ENCODE measurements at regions of chr16 and their contacts with region 1.

Region 1: DNA sequence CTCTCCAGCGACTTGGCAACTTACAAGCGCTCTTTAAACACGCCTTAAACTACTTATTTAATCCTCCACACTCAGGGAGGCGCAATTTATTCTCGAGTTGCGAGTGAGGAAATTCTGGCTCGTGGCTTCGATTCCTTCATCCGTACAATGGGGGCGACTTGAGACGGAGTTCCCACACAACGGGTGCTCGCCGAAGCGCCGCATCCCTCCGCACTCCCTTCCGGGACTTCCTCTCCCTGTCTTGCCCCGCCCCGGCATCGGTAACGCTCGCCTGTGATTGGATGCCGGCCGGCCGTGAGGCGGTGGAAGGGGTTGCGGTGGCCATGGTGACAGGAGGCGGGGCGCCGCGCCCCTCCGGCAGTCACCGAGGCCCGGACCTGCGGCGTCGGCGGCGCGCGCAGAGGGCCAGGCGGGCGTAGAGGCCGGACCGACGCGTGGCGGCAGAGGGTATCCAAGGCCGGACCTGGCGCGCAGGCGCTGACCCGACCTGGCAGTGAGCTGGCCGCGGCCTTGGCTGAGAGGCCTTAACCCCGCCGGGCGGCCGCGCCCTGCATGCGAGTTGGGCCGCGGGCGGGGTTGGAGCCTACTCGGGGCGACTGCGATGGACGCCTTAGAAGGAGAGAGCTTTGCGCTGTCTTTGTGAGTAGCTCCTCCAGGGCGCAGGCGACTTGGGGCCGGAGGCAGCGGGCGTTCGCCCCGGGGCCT is at the start of gene ARL2BP:
- DNase-seq: peak; percentile 100
- CTCF ChIP-seq: no peak

Region 2: DNA sequence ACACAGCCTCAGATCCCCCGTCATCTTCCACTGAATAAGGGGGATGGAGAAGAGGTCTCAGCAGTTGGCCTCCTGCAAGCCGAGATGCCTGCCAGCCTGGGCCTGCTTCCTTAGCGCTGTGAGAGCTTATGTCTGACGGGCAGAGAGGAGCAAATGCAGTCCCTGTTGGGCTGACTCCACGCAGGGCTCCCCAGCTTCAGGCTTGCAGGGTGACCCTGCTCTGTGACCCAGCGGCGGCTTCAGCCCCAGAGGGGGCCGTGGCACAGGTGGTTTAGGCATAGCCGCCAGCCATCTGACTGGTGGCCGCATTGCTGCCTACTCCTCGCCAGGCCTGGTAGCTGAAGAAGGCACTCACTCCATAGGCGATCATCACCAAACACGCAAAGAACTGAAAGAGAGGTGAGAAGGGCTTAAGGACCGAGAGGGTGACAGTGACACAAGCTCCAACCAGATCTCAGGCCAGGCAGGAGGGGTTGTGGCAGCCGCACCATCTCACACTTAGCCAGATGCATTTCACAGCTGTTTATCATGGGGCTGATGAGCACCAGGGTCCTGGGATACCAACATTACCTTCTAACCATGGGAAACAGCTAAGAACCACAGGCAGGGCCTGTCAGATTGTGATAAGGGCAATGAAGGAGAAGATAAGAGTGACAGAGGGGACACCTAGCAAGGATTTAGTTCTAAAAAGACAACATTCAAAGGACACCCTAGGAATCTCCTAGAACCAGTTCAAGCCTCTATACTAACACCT is 11.9 kb after region 1 on chr16:
- CTCF ChIA-PET with region 1: interaction called, 4 read pairs
- POLR2A ChIA-PET with region 1: interaction called, 10 read pairs
- DNase-seq: no peak
- CTCF ChIP-seq: no peak

Measured in GM10248 (cell line).